ENCODE measurements at regions of chr17 and their contacts with region 1.

Region 1: DNA sequence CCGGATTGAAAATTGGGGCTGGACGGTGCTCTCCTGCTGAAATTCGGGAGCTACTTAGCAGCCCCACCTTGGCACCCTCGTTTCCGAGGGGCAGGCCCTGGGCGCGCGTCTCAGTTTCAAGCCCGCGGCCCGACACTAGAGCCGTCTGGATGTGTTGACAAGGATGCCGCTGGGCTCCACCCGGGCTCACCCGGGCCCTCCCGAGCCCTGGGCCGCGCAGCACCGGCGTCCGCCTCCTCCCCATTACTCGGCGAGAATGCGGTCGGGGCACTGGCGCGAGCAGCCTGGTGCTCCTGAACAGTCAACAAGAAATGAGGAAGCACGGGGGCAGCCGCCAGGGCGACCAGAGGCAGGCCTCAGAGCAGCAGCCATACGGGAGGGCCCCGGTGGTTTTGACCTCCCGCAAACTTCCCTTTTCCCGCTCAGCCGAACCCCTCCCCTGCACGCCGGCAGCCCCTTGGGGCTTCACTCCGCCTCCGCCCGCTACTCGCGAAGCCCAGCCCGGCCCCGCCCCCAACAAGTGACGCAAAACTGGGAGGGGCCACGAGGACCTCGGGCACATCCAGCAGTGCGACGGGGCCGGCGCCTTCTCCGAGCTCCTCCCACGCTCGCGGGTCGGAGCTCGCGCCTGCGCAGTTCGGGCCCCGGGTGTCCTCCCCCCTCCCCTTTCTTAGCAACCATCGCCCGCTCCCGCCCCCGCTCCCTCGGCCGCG is 447 bp upstream of the SEC14L1 start:
- DNase-seq: peak; percentile 99 to 100 (median 100)
- ATAC-seq: peak; percentile 88
- H3K4me3 ChIP-seq: peak overlapping the region; percentile 74
- H3K4me3 Mint-ChIP-seq: peak overlapping the region; percentile 90
- H3K27ac ChIP-seq: peak overlapping the region; percentile 84 to 86
- H3K27ac Mint-ChIP-seq: peak overlapping the region; percentile 95
- H3K4me1 ChIP-seq: peaks cover 46% of the 10 kb centered on the region
- H3K4me1 Mint-ChIP-seq: peaks cover 61% of the 10 kb centered on the region
- H3K27me3 ChIP-seq: no peaks in the 10 kb centered on the region
- H3K27me3 Mint-ChIP-seq: no peaks in the 10 kb centered on the region
- CTCF ChIP-seq: no peak

Region 2: GRCh38 chr17:77088455-77089123 is 51.7 kb before region 1 on chr17:
- CTCF ChIA-PET with region 1: interaction called, 19 read pairs
- POLR2A ChIA-PET with region 1: interaction called, 47 read pairs
- intact Hi-C with region 1: loop called (anchors 1 to 2 kb)
- DNase-seq: peak; percentile 68 to 95 (median 80)
- ATAC-seq: peak; percentile 87
- H3K4me3 ChIP-seq: peak overlapping the region; percentile 98
- H3K4me3 Mint-ChIP-seq: peak overlapping the region; percentile 99
- H3K27ac ChIP-seq: peak overlapping the region; percentile 70 to 95
- H3K27ac Mint-ChIP-seq: peak overlapping the region; percentile 95
- H3K4me1 ChIP-seq: peaks cover 49% of the 10 kb centered on the region
- H3K4me1 Mint-ChIP-seq: peaks cover 44% of the 10 kb centered on the region
- H3K27me3 ChIP-seq: no peaks in the 10 kb centered on the region
- H3K27me3 Mint-ChIP-seq: no peaks in the 10 kb centered on the region
- CTCF ChIP-seq: peak; percentile 57

Region 3: DNA sequence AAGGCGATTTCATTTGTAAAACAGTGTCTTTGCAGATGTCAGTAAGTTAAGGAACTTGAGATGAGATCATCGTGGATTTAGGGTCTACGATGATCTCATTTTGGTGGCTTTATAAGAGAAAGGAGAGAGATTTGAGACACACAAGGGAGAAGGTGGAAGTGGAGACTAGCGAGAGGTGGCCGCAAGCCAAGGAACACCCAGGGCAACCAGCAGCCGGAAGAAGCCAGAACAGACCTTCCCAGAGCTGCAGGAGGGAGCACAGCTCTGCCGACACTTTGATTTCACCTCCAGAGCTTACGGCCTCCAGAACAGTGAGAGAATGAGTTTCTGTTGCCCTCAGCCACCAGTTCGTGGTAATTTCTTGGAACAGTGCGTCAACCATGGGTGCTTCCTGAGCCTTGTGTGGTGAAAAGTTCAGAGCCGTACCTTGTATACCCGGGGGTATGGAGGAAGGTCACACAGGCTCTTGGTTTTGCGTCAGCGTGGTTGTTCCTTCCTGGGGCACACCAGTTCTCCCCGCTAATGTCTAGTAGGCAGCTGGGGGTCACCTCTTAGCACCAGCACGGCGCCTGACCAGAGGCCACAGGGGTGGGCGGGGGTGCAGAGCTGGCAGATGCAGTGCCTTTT is 12.5 kb before region 1 on chr17:
- CTCF ChIA-PET with region 1: interaction called, 3 read pairs
- POLR2A ChIA-PET with region 1: interaction called, 58 read pairs
- intact Hi-C with region 1: loop called in 1 of 2 experiments (anchors 1 kb)
- DNase-seq: peak; percentile 37 to 90 (median 63)
- ATAC-seq: peak; percentile 93
- H3K4me3 ChIP-seq: peak overlapping the region; percentile 41
- H3K4me3 Mint-ChIP-seq: peak overlapping the region; percentile 57
- H3K27ac ChIP-seq: peak overlapping the region; percentile 51 to 74
- H3K27ac Mint-ChIP-seq: peak overlapping the region; percentile 91
- H3K4me1 ChIP-seq: peaks cover 28% of the 10 kb centered on the region
- H3K4me1 Mint-ChIP-seq: peaks cover 32% of the 10 kb centered on the region
- H3K27me3 ChIP-seq: no peaks in the 10 kb centered on the region
- H3K27me3 Mint-ChIP-seq: no peaks in the 10 kb centered on the region
- CTCF ChIP-seq: no peak

Region 4: DNA sequence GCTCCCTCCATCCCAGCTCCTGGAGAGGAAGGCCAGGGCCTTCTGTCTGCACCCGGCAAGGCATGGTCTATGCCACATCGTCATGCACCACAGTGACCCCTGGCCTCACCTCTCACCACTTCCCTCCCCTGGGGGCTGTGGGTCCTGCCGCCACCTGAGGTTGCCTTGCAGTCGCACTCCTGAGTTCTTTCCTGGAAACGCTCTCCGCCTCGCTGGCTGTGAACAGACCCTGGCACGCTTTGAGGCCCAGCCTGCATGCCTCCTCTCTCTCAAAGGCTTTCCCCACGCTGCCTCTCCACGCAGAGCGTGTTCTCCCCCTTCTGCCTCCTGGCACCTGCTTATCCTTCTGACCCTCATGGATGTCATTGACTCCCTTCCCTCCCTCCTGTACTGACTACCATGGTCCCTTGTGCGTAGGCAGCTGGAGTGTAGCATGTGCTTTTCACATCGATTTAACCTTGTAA is 45.9 kb after region 1 on chr17:
- CTCF ChIA-PET with region 1: no interaction called
- POLR2A ChIA-PET with region 1: interaction called, 24 read pairs
- intact Hi-C with region 1: loop called in 1 of 2 experiments (anchors 5 kb)
- DNase-seq: peak in 2 of 14 experiments; percentile 1 to 21
- ATAC-seq: peak; percentile 17
- H3K4me3 ChIP-seq: no peak overlapping the region
- H3K4me3 Mint-ChIP-seq: no peak overlapping the region
- H3K27ac ChIP-seq: no peak overlapping the region
- H3K27ac Mint-ChIP-seq: no peak overlapping the region
- H3K4me1 ChIP-seq: peaks cover 56% of the 10 kb centered on the region
- H3K4me1 Mint-ChIP-seq: peaks cover 29% of the 10 kb centered on the region
- H3K27me3 ChIP-seq: no peaks in the 10 kb centered on the region
- H3K27me3 Mint-ChIP-seq: no peaks in the 10 kb centered on the region
- CTCF ChIP-seq: no peak

Region 5: DNA sequence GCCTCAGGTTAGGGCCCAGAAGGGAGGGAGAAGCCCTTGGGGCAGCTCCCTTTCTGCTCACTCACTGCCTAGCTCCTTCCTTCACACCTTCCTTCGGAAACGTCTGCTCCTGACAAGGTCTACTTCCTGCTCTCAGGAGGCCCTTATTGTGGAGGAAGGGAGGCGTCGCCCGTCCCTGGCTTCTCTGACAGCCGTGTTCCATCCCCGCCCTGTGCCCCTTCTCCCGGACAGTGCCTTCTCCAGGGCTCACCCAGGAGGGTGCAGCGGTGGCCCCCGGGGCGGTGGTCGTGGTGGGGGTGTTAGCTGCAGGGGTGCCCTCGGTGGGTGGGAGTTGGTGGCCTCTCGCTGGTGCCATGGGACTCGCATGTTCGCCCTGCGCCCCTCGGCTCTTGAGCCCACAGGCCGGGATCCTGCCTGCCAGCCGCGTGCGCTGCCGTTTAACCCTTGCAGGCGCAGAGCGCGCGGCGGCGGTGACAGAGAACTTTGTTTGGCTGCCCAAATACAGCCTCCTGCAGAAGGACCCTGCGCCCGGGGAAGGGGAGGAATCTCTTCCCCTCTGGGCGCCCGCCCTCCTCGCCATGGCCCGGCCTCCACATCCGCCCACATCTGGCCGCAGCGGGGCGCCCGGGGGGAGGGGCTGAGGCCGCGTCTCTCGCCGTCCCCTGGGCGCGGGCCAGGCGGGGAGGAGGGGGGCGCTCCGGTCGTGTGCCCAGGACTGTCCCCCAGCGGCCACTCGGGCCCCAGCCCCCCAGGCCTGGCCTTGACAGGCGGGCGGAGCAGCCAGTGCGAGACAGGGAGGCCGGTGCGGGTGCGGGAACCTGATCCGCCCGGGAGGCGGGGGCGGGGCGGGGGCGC is 232.3 kb after region 1 on chr17:
- CTCF ChIA-PET with region 1: no interaction called
- POLR2A ChIA-PET with region 1: no interaction called
- intact Hi-C with region 1: no loop called
- DNase-seq: peak in 13 of 14 experiments; percentile 30 to 78 (median 58)
- ATAC-seq: peak; percentile 25
- H3K4me3 ChIP-seq: peak overlapping the region; percentile 100
- H3K4me3 Mint-ChIP-seq: peak overlapping the region; percentile 93
- H3K27ac ChIP-seq: peak overlapping the region; percentile 45 to 60
- H3K27ac Mint-ChIP-seq: peak overlapping the region; percentile 91
- H3K4me1 ChIP-seq: peaks cover 73% of the 10 kb centered on the region
- H3K4me1 Mint-ChIP-seq: peaks cover 75% of the 10 kb centered on the region
- H3K27me3 ChIP-seq: no peaks in the 10 kb centered on the region
- H3K27me3 Mint-ChIP-seq: no peaks in the 10 kb centered on the region
- CTCF ChIP-seq: no peak